ENCODE measurements at regions of chr1 and their contacts with region 1.

Region 1: DNA sequence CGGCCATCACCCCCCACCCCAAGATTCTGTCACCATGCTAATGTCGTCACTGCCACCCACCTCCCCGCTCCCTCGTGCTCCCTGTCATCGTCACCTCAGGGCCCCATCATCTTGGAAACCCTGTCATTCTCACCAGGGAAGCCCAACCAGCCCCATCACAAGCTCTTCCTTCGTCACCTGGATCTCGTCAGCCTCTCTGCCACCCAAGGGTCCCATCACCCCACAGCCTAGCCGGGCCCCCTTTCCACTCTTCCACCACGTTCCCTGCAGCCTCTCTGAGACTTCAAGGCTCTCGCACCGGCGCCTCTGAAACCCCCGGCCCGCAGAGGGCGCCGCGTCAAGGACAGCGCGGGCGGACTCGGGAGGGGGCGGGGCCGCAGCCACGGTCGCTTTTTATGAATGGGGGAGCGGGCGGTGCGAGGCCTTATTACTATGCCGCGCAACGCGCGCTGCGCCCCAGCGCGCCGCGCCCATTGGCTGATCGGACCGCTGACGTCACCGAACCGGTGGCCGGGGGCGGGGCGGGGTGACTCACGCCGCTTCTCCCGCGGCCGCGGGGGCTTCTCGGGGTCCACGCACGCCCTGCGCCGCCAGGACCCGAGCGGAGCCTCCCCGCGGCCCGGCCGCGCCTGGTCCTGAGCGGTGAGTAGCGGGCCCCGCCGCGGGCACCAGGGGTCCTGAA is at the start of gene GPR3:
- DNase-seq: peak; percentile 93
- H3K4me3 ChIP-seq: peak within 1 kb of the TSS; percentile 35 to 55 (median 46)
- H3K27ac ChIP-seq: peak within 1 kb of the TSS; percentile 29 to 74 (median 60)
- H3K4me1 ChIP-seq: peaks cover 16 to 23% (median 18%) of the 10 kb centered on the region in 4 donors
- H3K27me3 ChIP-seq: peaks cover 7% of the 10 kb centered on the region
- CTCF ChIP-seq: peak; percentile 39 to 64 (median 55)
- EP300 ChIP-seq: no peak
- POLR2A ChIP-seq: no peak
- total RNA-seq, gene GPR3: not detected

Region 2: DNA sequence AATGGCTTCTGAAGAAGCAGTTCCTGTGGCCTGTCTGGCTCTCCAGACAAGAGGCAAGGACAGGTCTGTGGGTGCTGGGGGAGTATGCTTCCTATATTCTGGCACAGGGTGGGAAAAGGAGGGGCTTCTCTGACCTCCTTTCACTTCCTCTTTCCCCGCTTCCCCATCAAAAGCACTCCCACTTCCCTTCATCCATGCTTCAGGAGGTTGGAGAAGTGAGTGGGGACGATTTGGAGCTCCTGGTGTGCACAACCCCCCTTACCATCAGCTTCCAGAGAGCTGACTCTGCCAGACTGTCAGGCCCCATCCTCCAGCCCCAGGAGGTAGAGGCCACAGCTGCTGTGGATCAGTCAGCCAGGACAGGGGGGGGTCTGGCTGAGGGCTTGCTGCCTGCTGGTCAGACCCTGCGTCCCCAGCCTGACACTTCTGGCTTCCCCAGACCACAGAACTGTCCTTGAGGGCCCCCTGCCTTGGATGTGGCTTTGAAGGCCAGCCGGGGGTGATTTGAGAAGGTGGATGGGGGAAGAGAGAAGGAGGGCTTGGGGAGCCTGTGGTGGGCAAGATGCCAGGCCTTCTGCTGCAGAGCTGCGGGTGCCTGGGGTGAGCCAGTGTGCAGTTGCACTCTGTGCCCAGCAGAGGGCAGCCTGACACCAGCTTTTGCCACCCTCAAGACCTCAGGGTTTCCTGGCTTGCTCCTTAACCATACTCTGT is 91.7 kb before region 1 on chr1:
- in situ Hi-C with region 1: loop called (anchors 5 kb)
- intact Hi-C with region 1: loop called (anchors 5 kb)
- DNase-seq: peak; percentile 80
- H3K4me3 ChIP-seq: no peak overlapping the region
- H3K27ac ChIP-seq: peak overlapping the region; percentile 78 to 92 (median 88)
- H3K4me1 ChIP-seq: peaks cover 18 to 31% (median 23%) of the 10 kb centered on the region in 4 donors
- H3K27me3 ChIP-seq: no peaks in the 10 kb centered on the region
- CTCF ChIP-seq: peak; percentile 96 to 100 (median 99)
- EP300 ChIP-seq: no peak
- POLR2A ChIP-seq: no peak

Region 3: DNA sequence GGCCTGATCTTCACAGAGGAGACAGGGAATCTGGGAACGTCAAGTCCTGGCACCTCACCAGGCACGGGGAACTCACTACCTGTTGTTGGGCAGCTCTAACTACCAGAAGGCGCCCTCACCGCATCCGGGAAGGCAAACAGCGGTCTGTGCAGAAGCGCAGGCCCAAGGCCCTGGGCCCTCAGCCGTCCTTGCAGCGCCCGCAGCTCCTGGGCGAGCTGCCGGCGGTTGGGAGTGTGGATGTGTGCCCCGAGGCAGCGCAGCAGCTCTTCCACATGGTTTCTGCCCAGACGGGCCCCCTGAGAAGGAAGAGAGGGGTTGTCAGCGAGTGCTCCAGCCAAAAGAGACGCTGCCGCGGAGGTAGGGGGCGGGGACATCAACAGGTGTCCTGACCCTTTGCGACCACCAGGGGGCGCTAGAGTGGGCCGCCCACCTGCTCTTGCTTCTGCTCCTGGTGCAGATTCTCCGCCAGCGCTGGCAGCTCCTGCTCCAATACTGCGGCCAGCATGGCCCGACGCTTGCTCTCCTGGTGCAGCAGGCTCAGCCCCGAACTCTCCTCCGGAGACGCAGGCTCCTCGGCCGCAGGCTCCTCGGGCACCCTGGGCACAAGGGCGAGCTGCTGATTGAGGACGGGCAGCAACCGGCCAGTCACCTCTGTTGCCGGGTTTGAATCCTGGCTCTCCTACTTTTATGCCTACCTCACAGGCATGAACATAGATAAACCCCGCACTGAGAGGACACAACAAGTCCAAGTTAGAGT is 34.8 kb before region 1 on chr1:
- in situ Hi-C with region 1: no loop called
- intact Hi-C with region 1: loop called (anchors 2 kb)
- DNase-seq: peak; percentile 80
- H3K4me3 ChIP-seq: peak overlapping the region in 3 of 4 donors; percentile 7 to 44 (median 22)
- H3K27ac ChIP-seq: peak overlapping the region; percentile 51 to 79 (median 62)
- H3K4me1 ChIP-seq: peaks cover 8 to 26% (median 24%) of the 10 kb centered on the region in 4 donors
- H3K27me3 ChIP-seq: no peaks in the 10 kb centered on the region
- CTCF ChIP-seq: peak; percentile 97 to 100 (median 99)
- EP300 ChIP-seq: no peak
- POLR2A ChIP-seq: no peak